ENCODE measurements at regions of chr12 and their contacts with region 1.

Region 1: GRCh38 chr12:122526683-122527477 is at the starts of genes KNTC1 and RSRC2:
- DNase-seq: peak; percentile 97
- ATAC-seq: peak; percentile 99
- total RNA-seq, gene KNTC1: 2.6 TPM
- total RNA-seq, gene RSRC2: 32.8 TPM

Region 2: DNA sequence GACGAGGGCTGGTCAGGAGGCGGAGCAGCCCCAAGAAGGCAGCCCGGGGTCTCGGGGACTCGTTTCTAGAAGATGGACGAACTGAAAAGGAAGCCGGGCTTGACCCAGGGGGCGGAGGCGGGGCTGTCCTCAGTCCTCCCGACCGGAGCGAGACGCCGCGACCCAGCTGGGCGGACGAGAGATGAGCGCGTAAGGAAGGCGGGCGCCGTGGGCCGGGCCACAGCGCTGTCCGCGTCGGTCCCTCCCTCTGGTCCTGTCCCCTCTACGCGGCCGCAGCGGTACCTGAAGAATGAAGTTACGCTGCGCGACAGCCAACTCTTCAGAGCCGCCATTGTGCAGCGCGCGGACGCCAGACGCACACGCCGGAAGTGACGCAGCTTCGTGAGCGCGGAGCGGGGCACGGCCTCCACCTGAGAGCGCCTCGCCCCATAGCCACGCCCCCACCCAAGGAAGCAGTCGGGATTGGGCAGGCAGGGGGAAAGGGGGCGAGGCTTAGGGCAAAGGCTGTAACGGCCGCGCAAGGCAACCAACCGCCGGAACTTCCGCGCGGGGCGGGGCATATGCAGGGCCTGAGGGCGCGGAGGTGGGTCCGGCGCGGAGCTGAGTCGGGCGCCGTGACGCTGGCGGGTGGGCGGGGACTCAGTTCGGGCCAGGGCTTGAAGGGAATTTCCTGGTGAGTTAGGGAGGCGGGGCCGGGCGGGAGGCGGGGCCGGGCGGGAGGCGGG is 301.0 kb before region 1 on chr12 and contains the start of gene DIABLO:
- intact Hi-C with region 1: loop called (anchors 2 kb)
- DNase-seq: peak; percentile 100
- ATAC-seq: peak; percentile 99
- total RNA-seq, gene DIABLO: 28.2 TPM

Region 3: GRCh38 chr12:122481861-122482260 is 45.0 kb before region 1 on chr12:
- intact Hi-C with region 1: loop called (anchors 5 kb)
- DNase-seq: no peak
- ATAC-seq: no peak

Region 4: DNA sequence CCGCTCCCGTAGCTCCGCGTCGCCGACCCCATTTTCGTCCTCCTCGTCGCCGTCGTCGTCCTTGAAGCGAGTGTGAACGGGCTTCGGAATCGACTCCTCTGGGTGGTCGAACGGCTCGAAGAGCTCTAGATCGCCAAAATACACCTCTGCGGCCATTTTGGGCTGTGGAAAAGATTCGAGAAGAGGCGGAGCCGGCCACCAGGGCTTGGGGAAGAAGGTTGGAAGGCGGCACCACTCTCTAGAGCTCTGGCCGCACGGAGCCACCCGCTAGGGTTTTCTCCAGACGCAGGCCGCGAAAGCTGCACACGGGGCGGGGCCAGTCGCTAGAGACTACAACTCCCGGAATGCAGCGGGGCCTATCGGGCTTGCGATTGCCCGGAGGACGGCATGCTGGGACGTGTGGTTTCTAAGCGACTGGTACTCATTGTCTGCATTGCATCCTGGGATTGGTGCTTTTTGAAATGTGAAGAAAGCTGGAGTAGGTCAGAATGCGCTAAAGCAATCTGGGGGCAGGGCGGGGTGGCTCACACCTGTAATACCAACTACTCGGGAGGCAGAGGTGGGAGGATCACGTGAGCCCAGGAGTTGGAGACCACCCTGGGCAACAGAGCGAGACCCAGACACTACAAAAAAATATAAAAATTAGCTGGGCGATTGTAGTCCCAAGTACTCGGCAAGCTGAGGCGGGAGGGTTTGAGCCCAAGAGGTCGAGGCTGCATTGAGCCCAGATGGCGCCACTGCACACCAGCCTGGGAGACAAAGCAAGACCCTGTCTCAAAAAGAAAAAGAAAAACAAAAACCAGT is 26.0 kb before region 1 on chr12 and contains the start of gene ZCCHC8:
- intact Hi-C with region 1: loop called (anchors 2 kb)
- DNase-seq: peak; percentile 99
- ATAC-seq: peak; percentile 99
- total RNA-seq, gene ZCCHC8: 8.9 TPM

Region 5: DNA sequence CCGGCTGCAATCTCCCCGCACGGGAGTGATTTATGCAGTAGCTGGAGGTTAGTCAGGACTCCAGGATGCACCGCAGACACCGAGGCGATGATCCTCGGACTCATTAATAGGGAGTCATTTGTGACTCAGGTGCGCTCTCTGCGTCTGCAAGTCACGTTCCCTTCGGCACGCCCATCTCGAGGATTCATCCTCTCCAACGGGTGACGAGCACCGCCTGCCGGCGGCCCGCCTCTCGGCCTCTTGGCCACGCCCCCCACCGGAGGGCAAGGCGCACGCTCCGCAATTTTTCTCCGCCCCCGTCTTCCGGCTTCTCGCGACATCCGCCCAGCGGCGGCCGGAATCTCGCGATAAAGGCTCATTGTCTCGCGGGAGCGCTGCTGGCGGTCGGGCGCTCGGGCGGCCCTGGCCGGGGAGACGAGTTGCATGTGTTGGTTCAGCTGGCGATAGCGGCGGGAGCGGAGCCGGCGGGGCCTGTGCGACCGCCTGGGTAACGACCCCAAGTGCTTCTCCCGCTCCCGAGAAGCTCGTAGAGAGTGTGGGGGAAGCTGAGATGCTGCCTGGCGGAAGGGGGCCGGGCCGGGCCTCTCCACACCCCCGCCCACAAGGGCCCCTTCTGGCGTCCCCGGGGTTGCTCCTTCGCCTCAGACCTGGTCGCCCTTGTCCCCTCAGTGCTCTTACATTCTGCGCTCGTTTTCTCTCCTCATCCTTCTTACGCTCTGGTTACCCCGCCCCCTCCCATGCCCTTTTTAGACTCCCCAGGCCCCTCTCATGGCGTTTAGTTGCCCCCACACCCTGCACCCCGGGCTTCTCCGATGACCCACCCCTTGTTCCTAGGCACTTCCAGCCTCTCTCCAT is 225.8 kb after region 1 on chr12 and contains the start of gene DENR:
- intact Hi-C with region 1: loop called (anchors 2 kb)
- DNase-seq: peak; percentile 98
- ATAC-seq: peak; percentile 99
- total RNA-seq, gene DENR: 28.1 TPM

Measured in Right ventricle myocardium inferior (tissue), 1 donor.